Activated naive CD4-positive, alpha-beta T cell treated with anti-CD3 and anti-CD28 coated beads for 36 hours (primary cell): ENCODE measurements at regions of chr6 and their contacts with region 1.

Region 1: DNA sequence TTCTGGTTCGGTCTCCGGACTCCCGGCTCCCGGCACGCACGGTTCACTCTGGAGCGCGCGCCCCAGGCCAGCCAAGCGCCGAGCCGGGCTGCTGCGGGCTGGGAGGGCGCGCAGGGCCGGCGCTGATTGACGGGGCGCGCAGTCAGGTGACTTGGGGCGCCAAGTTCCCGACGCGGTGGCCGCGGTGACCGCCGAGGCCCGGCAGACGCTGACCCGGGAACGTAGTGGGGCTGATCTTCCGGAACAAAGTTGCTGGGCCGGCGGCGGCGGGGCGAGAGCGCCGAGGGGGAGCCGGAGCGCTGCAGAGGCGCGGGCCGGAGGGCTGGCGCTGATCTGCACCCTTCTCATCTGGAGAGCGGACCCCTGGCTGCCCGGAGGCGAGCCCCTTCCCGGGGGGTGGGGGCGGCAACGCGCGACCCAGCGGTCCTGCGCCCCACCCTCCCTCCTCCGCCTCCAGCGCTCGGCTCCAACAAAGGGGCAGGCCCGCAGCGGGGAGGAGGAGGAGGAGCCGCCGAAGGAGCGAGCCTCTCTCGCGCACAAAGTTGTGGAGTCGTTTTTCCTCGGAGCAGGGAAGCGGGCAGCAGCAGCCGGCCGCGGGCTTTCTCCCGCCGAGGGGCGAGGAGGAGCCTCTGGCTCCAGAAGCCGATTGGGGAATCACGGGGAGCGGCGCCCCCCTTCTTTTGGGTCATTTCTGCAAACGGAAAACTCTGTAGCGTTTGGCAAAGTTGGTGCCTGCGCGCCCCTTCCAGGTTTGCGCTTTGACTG is at the start of gene UTRN:
- DNase-seq: peak; percentile 64
- H3K4me3 Mint-ChIP-seq: peak within 1 kb of the TSS; percentile 86
- H3K27ac Mint-ChIP-seq: no peak within 1 kb of the TSS
- H3K4me1 Mint-ChIP-seq: peaks cover 12% of the 10 kb centered on the region
- H3K27me3 Mint-ChIP-seq: peaks cover 21% of the 10 kb centered on the region
- total RNA-seq, gene UTRN: 35.3 to 39.9 TPM

Region 2: DNA sequence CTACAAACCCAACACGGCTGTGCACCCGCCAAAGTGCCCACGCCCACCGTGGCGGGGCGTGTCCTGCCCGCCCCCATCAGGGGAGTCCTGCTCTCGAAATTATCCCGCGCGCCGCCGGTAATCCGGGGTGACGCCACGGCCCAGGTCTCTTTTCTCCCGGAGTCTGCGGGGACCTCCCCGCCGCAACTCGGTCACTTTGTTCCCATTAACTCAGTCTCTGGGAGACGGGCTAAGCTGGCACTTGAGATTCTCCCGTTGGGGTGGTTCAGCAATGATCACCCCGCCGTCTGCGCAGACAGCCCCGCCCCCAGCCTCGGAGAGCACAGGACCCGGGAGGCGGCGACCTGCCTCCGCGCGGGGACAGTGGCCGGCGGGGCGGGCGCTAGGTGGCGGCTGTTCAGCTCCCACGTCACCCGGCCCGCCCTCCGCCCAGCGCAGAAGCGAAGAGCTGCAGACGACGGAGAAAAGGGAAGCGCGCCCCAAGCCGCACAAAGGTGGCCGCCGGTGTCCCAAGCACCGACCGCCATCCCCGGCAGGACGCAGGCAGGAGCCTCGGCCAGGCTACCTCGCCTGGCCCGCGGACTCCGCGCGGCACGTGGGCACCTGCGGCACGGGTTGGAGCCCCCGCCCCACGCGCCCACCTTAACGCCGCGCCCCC is 221.1 kb before region 1 on chr6:
- CTCF ChIA-PET with region 1: no interaction called
- intact Hi-C with region 1: loop called (anchors 1 kb)
- DNase-seq: peak; percentile 86
- H3K4me3 Mint-ChIP-seq: peak overlapping the region; percentile 75
- H3K27ac Mint-ChIP-seq: peak overlapping the region; percentile 43
- H3K4me1 Mint-ChIP-seq: peaks cover 40% of the 10 kb centered on the region
- H3K27me3 Mint-ChIP-seq: no peaks in the 10 kb centered on the region

Region 3: GRCh38 chr6:144131248-144131709 is 153.7 kb before region 1 on chr6:
- CTCF ChIA-PET with region 1: no interaction called
- intact Hi-C with region 1: loop called (anchors 1 kb)
- DNase-seq: no peak
- H3K4me3 Mint-ChIP-seq: peak overlapping the region; percentile 57
- H3K27ac Mint-ChIP-seq: peak overlapping the region; percentile 92
- H3K4me1 Mint-ChIP-seq: peaks cover 52% of the 10 kb centered on the region
- H3K27me3 Mint-ChIP-seq: peaks cover 3% of the 10 kb centered on the region

Region 4: GRCh38 chr6:144310765-144311164 is 25.8 kb after region 1 on chr6:
- CTCF ChIA-PET with region 1: no interaction called
- intact Hi-C with region 1: loop called (anchors 2 kb)
- DNase-seq: peak; percentile 47
- H3K4me3 Mint-ChIP-seq: no peak overlapping the region
- H3K27ac Mint-ChIP-seq: no peak overlapping the region
- H3K4me1 Mint-ChIP-seq: peaks cover 12% of the 10 kb centered on the region
- H3K27me3 Mint-ChIP-seq: no peaks in the 10 kb centered on the region

Region 5: GRCh38 chr6:144469144-144469575 is 184.2 kb after region 1 on chr6:
- CTCF ChIA-PET with region 1: interaction called, 4 read pairs
- intact Hi-C with region 1: loop called (anchors 1 kb)
- DNase-seq: peak; percentile 43
- H3K4me3 Mint-ChIP-seq: peak overlapping the region; percentile 42
- H3K27ac Mint-ChIP-seq: peak overlapping the region; percentile 46
- H3K4me1 Mint-ChIP-seq: peaks cover 20% of the 10 kb centered on the region
- H3K27me3 Mint-ChIP-seq: no peaks in the 10 kb centered on the region